Sciatic nerve (tissue), 2 donors: ENCODE measurements at regions of chr10 and their contacts with region 1.

Region 1: DNA sequence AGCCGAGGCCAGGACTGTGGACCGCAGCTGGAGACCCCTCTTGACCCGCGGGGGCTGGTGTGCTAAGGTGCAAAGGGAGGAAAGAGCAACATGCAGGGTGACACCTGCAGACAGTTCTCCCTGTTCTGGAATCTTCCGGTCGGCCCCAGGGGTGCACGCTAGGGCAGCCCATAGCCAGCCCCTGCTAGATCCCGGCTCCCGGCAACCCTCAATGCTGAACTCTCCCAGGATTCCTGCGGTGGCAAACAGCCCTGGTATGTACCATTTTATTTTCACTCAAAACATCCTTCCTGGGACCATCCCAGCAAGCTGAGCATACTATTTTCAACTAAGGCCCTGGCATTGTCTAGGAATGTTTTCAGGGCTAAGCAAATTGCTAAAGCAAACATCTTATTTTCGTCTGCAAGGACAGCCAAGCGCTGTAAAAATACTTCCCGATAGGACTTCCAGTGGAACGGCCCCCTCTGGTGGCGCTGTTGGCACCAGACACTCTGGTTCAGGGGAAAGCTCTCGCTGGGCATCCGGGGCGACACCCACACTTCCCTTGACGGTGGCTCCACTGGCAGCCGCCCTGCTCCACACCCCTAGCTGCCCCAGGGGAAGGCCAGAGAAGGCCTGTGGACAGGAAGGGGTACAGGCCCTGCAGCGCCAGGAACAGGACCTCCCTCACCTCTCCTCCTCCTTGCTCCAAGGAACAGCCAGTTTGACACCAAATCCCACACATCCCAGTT is 99.4 kb downstream of the CTBP2 start:
- DNase-seq: peak; percentile 93
- ATAC-seq: peak; percentile 64

Region 2: GRCh38 chr10:124916585-124917427 is 144.2 kb before region 1 on chr10:
- intact Hi-C with region 1: no loop called
- DNase-seq: peak; percentile 99
- ATAC-seq: peak; percentile 99

Region 3: DNA sequence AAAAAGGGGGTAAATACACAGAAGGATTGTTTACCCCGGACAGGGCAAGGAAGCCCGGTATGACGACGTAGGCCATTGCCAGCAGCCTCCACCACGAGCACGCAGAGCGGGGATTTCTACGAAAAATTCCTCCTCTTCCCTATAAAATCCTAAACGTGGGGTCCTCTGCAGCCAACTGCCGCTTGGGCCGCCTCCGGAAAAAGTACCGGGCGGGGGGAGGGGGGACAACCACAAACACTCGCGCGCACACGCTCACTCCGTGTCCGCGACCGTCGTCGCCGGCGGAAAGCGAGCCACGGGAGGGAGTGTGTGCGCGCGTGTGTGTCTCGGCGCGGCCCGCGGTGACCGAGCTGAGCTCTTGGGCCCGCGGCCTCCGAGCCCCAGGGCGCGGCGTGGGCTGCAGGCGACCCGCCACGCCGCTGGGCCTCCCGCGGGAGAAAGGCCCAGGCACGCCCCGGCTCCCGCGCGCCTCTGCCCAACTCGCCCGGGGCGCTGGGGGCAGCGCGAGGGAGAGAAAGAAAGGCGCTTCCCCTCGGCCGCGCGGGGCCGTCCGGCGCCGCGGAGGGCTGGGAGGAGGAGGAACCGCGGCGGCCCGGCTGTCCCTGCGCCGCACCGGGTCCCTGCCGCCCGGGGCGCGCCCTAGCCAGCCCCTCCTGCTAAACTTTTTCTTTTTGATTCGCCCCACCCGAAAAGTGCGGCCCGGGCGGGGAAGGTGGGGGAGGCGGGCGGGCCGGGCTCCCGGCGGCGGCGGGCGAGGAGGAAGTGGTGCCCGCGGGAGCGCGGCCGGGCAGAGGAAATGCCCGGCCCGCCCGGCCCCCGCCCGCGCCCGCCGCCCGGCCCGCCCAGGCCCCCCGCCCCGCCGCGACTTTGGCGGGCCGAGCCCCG is 97.9 kb after region 1 on chr10:
- intact Hi-C with region 1: loop called (anchors 10 kb)
- DNase-seq: peak; percentile 71
- ATAC-seq: peak; percentile 57